Naive thymus-derived CD8-positive, alpha-beta T cell (primary cell): ENCODE measurements at regions of chr6 and their contacts with region 1.

Region 1: GRCh38 chr6:139161817-139162284 is 27.0 kb downstream of the HECA start:
- DNase-seq: peak; percentile 25 to 76 (median 60)
- ATAC-seq: peak; percentile 53 to 65
- H3K4me3 Mint-ChIP-seq: peak overlapping the region; percentile 70 to 95 (median 83)
- H3K27ac Mint-ChIP-seq: peak overlapping the region; percentile 85 to 97 (median 94)
- H3K4me1 Mint-ChIP-seq: peaks cover 51 to 95% (median 91%) of the 10 kb centered on the region in 4 donors
- H3K27me3 Mint-ChIP-seq: no peaks in the 10 kb centered on the region

Region 2: GRCh38 chr6:139117734-139118133 is 44.1 kb before region 1 on chr6:
- POLR2A ChIA-PET with region 1: interaction called, 11 read pairs
- DNase-seq: no peak
- ATAC-seq: no peak
- H3K4me3 Mint-ChIP-seq: peak overlapping the region in 7 of 10 donors; percentile 15 to 65 (median 48)
- H3K27ac Mint-ChIP-seq: peak overlapping the region; percentile 5 to 91 (median 68)
- H3K4me1 Mint-ChIP-seq: peaks cover 25 to 52% (median 49%) of the 10 kb centered on the region in 4 donors
- H3K27me3 Mint-ChIP-seq: no peaks in the 10 kb centered on the region

Region 3: DNA sequence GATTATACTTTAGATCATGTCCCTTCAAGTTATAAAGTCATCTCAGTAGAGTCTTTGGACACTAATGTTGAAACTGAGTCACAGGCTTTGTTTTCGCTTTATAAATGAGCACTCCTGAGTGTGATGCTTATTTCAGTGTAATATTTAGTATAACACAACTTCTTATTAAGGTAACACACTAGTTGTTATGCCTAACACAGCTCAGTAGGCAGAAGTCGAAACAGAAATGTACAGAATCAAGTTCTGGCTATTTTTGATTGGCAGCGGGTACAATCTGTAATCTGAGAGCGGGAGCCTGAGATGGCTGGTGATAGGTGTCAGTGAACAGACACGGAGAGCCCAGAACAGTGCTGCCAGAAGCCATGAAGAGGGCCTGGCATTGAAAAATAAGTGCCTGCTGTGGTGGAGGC is 15.5 kb before region 1 on chr6:
- POLR2A ChIA-PET with region 1: interaction called, 105 read pairs
- DNase-seq: no peak
- ATAC-seq: peak in 1 of 2 donors; percentile 23
- H3K4me3 Mint-ChIP-seq: peak overlapping the region; percentile 43 to 83 (median 77)
- H3K27ac Mint-ChIP-seq: peak overlapping the region; percentile 18 to 88 (median 54)
- H3K4me1 Mint-ChIP-seq: peaks cover 59 to 95% (median 93%) of the 10 kb centered on the region in 4 donors
- H3K27me3 Mint-ChIP-seq: no peaks in the 10 kb centered on the region

Region 4: GRCh38 chr6:139173172-139173571 is 11.3 kb after region 1 on chr6:
- POLR2A ChIA-PET with region 1: interaction called, 49 read pairs
- DNase-seq: peak in 4 of 10 donors; percentile 28 to 70 (median 52)
- ATAC-seq: peak; percentile 75
- H3K4me3 Mint-ChIP-seq: peak overlapping the region; percentile 23 to 79 (median 66)
- H3K27ac Mint-ChIP-seq: peak overlapping the region; percentile 72 to 92 (median 87)
- H3K4me1 Mint-ChIP-seq: peaks cover 68 to 96% (median 93%) of the 10 kb centered on the region in 4 donors
- H3K27me3 Mint-ChIP-seq: no peaks in the 10 kb centered on the region